MCF 10A (cell line): ENCODE measurements at regions of chr10 and their contacts with region 1.

Region 1: GRCh38 chr10:101441541-101442455 is 87.8 kb downstream of the BTRC start:
- DNase-seq: peak; percentile 75
- H3K4me3 Mint-ChIP-seq: no peak overlapping the region
- H3K27ac Mint-ChIP-seq: no peak overlapping the region
- H3K4me1 Mint-ChIP-seq: peaks cover 6% of the 10 kb centered on the region
- H3K27me3 Mint-ChIP-seq: no peaks in the 10 kb centered on the region
- CTCF ChIP-seq: peak; percentile 66

Region 2: GRCh38 chr10:101272229-101272868 is 169.4 kb before region 1 on chr10:
- CTCF ChIA-PET with region 1: interaction called, 15 read pairs
- POLR2A ChIA-PET with region 1: interaction called, 3 read pairs
- intact Hi-C with region 1: no loop called
- DNase-seq: peak; percentile 77
- H3K4me3 Mint-ChIP-seq: no peak overlapping the region
- H3K27ac Mint-ChIP-seq: no peak overlapping the region
- H3K4me1 Mint-ChIP-seq: peaks cover 19% of the 10 kb centered on the region
- H3K27me3 Mint-ChIP-seq: no peaks in the 10 kb centered on the region
- CTCF ChIP-seq: peak; percentile 73

Region 3: GRCh38 chr10:101297901-101298486 is 143.8 kb before region 1 on chr10:
- CTCF ChIA-PET with region 1: interaction called, 28 read pairs
- POLR2A ChIA-PET with region 1: no interaction called
- intact Hi-C with region 1: loop called (anchors 1 kb)
- DNase-seq: peak; percentile 69
- H3K4me3 Mint-ChIP-seq: no peak overlapping the region
- H3K27ac Mint-ChIP-seq: no peak overlapping the region
- H3K4me1 Mint-ChIP-seq: peaks cover 10% of the 10 kb centered on the region
- H3K27me3 Mint-ChIP-seq: peaks cover 65% of the 10 kb centered on the region
- CTCF ChIP-seq: peak; percentile 72

Region 4: DNA sequence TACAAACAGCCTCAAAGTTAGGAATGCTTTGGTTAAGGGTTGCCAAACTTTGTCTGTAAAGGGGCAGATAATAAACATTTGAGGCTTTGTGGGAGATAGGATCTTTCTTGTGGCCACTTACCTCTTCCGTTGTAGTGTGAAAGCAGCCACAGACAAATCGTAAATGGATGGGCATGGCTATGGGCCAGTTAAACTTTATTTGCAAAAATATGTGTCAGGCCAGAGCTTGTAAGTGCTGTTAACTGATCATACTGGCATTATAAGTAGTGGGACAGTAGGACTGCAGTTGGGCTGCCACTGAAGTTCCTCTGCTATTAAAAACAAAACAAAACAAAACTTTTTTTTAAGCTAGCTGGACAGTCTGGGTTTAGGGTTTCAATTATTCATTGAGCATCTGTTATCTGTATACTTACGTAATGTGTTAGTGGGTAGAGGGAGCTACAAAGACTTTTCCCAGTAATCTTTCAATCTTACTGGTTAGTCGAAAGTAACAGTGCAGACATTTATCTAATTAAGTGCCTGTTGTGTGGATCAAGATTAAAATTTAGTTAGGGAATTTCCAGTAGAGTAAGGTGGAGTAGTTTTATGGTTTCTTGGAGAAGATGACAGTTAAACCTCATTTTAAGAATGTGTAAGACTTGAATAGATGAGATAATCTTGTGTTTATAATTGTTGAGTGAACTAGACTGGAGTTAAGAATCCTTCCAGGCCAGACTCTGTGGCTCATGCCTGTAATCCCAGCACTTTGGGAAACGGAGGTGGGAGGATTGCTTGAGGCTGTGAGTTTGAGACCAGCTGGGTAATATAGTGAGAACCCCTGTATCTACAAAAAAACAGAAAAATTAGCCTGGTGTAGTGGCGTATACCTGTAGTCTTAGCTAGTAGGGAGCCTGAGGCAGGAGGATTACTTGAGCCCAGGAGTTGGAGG is 12.3 kb after region 1 on chr10:
- CTCF ChIA-PET with region 1: interaction called, 26 read pairs
- POLR2A ChIA-PET with region 1: interaction called, 3 read pairs
- intact Hi-C with region 1: no loop called
- DNase-seq: no peak
- H3K4me3 Mint-ChIP-seq: no peak overlapping the region
- H3K27ac Mint-ChIP-seq: no peak overlapping the region
- H3K4me1 Mint-ChIP-seq: peaks cover 6% of the 10 kb centered on the region
- H3K27me3 Mint-ChIP-seq: no peaks in the 10 kb centered on the region
- CTCF ChIP-seq: no peak